Naive thymus-derived CD4-positive, alpha-beta T cell (primary cell): ENCODE measurements at regions of chr18 and their contacts with region 1.

Region 1: DNA sequence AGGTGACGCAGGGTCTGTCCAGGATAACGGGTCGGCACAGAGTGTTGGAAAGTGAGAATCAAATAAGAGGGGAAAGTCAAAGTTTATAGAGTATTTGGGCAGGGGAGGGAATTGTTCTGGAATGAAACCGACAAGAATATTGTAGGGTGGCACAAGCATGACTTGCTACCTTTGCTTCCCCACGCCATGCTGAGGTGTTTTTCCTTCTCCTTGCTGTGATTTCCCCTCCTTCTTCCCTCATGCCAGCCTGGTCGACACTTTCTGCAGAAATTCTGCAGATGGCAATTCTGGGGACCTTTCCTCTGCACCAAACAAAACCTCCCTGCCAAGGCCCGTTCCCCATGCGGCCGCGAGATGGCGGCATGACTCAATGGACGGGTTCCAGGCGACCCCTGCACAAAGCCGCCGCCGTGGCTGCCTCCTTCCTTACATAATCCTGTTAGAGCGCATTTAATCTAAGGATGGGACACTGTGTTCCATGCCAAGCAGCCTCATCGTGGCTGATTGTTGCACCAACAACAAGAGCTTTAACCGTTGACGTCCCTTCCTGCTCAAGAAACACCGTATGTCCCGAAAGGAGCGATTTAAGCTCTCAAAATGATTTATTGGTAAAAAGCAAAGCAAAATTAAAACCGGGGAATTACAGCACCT is at the start of gene MRO:
- DNase-seq: peak; percentile 63 to 82 (median 76)
- ATAC-seq: peak; percentile 98
- H3K4me3 ChIP-seq: peak within 1 kb of the TSS; percentile 49
- H3K4me3 Mint-ChIP-seq: no peak within 1 kb of the TSS
- H3K27ac ChIP-seq: no peak within 1 kb of the TSS
- H3K27ac Mint-ChIP-seq: peak within 1 kb of the TSS in 1 of 9 donors; percentile 12
- H3K4me1 ChIP-seq: peaks cover 0 to 5% of the 10 kb centered on the region in 2 donors
- H3K4me1 Mint-ChIP-seq: peaks cover 0 to 3% (median 0%) of the 10 kb centered on the region in 7 donors
- H3K27me3 ChIP-seq: no peaks in the 10 kb centered on the region
- H3K27me3 Mint-ChIP-seq: peaks cover 7 to 21% (median 14%) of the 10 kb centered on the region in 5 donors
- total RNA-seq, gene MRO: not detected

Region 2: GRCh38 chr18:50866765-50867164 is 46.9 kb after region 1 on chr18:
- CTCF ChIA-PET with region 1: no interaction called
- POLR2A ChIA-PET with region 1: no interaction called
- intact Hi-C with region 1: loop called in 1 of 2 experiments (anchors 2 kb)
- DNase-seq: no peak
- ATAC-seq: peak; percentile 37
- H3K4me3 ChIP-seq: no peak overlapping the region
- H3K4me3 Mint-ChIP-seq: no peak overlapping the region
- H3K27ac ChIP-seq: no peak overlapping the region
- H3K27ac Mint-ChIP-seq: no peak overlapping the region
- H3K4me1 ChIP-seq: no peaks in the 10 kb centered on the region
- H3K4me1 Mint-ChIP-seq: no peaks in the 10 kb centered on the region
- H3K27me3 ChIP-seq: no peaks in the 10 kb centered on the region
- H3K27me3 Mint-ChIP-seq: peaks cover 0 to 15% (median 0%) of the 10 kb centered on the region in 5 donors

Region 3: DNA sequence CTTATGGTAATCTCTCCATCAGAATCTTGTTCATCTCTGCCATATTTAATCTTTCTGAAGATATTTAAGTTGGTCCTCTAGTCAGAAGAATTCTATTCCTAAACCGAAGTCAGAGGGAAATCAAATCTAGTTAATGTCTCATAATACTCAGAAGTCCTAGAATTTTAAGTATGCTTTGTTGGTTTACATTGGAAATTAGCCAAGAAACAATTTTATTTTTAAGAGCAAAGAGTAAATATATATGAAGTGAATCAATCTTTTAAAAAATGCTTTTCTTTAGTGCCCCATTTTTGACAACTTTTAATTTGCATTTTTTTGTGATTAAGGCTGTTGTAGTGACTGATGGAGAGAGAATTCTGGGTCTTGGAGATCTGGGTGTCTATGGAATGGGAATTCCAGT is 97.2 kb after region 1 on chr18:
- CTCF ChIA-PET with region 1: no interaction called
- POLR2A ChIA-PET with region 1: no interaction called
- intact Hi-C with region 1: loop called in 1 of 2 experiments (anchors 5 kb)
- DNase-seq: no peak
- ATAC-seq: no peak
- H3K4me3 ChIP-seq: no peak overlapping the region
- H3K4me3 Mint-ChIP-seq: no peak overlapping the region
- H3K27ac ChIP-seq: no peak overlapping the region
- H3K27ac Mint-ChIP-seq: peak overlapping the region in 1 of 9 donors; percentile 18
- H3K4me1 ChIP-seq: no peaks in the 10 kb centered on the region
- H3K4me1 Mint-ChIP-seq: peaks cover 1 to 11% (median 5%) of the 10 kb centered on the region in 7 donors
- H3K27me3 ChIP-seq: no peaks in the 10 kb centered on the region
- H3K27me3 Mint-ChIP-seq: no peaks in the 10 kb centered on the region

Region 4: DNA sequence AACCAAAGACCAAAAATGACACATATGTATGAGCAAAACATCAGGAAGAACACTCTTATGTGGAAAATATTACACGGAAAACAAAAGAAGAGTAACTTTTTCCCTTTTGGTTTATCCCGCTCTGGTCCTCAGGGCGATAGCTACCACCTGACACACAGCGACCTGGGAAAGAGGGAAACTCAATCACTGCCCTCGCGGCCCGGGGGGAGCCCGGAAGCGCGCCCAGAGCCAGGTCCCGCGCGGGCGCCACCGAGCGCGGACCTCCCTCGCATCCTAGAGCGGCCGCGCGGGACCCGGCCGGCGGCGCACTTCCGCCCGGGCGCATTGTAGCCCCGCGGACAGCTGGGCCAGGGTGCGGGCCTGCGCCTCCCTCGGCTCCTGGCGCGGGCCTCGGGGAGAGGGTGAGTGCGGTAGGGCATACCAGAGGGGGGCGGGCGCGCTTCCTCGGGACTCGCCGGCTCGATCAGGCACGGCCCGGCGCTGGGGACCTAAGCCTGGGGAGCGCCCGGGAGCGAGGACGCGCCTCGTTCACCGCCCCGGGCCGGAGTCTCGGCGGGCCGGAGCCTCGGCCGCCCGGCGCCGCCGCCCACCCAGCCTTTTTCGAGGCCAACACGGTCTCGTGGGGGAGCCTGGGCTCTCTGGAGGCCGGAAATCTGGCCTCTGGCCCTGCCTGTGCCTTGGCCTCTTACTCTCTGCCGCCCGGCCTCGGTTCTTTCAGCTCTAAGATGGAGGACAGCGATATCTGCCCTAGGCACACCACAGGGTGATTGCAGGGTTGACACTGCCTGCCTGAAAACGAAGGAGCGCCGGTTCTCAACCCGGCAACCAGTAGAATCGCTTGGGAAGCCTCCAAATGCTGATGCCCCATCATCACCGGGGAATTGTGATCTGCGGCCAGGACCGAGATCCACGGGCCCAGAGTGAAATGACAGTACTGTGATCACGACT is 148.1 kb after region 1 on chr18 and contains the start of gene ELAC1:
- CTCF ChIA-PET with region 1: interaction called, 3 read pairs
- POLR2A ChIA-PET with region 1: no interaction called
- intact Hi-C with region 1: loop called (anchors 1 to 2 kb)
- DNase-seq: peak; percentile 48 to 75 (median 65)
- ATAC-seq: peak; percentile 93
- H3K4me3 ChIP-seq: peak within 1 kb of the TSS; percentile 80
- H3K4me3 Mint-ChIP-seq: peak within 1 kb of the TSS; percentile 86 to 98 (median 94)
- H3K27ac ChIP-seq: peak within 1 kb of the TSS; percentile 90
- H3K27ac Mint-ChIP-seq: peak within 1 kb of the TSS; percentile 77 to 95 (median 92)
- H3K4me1 ChIP-seq: peaks cover 8 to 13% of the 10 kb centered on the region in 2 donors
- H3K4me1 Mint-ChIP-seq: peaks cover 15 to 35% (median 29%) of the 10 kb centered on the region in 7 donors
- H3K27me3 ChIP-seq: no peaks in the 10 kb centered on the region
- H3K27me3 Mint-ChIP-seq: no peaks in the 10 kb centered on the region
- total RNA-seq, gene ELAC1: 4.3 to 11.2 (median 6.3) TPM

Region 5: DNA sequence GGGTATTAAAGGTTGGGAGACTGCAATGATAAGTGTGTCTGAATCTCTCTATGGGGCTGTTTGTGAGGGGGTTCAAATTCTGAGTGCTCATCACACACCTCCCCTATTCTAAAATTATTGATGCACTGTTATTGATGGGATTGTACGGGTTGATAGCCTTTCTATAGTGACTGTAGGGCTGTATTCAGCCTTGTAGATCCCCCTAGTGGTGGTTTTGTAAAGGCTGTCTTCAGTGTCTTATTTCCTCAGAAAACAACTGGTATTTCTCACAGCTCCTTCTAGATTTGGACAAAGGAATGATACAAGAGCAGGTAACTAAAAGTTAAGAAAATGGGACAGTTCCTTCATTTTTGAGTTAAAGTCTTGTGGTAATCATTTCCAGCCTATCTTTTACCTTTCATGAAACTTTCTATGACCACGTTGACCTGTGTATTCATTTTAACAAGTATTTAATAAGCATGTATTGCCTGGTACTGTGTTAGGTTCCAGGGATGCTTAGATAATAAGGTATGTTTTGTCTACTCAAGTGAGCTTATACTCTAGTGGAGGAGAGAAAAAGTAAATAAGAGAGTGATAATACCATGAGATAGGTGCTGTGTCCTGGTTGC is 231.4 kb after region 1 on chr18:
- CTCF ChIA-PET with region 1: interaction called, 17 read pairs
- POLR2A ChIA-PET with region 1: no interaction called
- intact Hi-C with region 1: loop called (anchors 1 kb)
- DNase-seq: peak in 7 of 9 donors; percentile 47 to 71 (median 62)
- ATAC-seq: peak; percentile 95
- H3K4me3 ChIP-seq: no peak overlapping the region
- H3K4me3 Mint-ChIP-seq: no peak overlapping the region
- H3K27ac ChIP-seq: no peak overlapping the region
- H3K27ac Mint-ChIP-seq: peak overlapping the region in 8 of 9 donors; percentile 3 to 80 (median 36)
- H3K4me1 ChIP-seq: peaks cover 8% of the 10 kb centered on the region in 2 donors
- H3K4me1 Mint-ChIP-seq: peaks cover 17 to 55% (median 42%) of the 10 kb centered on the region in 7 donors
- H3K27me3 ChIP-seq: no peaks in the 10 kb centered on the region
- H3K27me3 Mint-ChIP-seq: no peaks in the 10 kb centered on the region

Region 6: DNA sequence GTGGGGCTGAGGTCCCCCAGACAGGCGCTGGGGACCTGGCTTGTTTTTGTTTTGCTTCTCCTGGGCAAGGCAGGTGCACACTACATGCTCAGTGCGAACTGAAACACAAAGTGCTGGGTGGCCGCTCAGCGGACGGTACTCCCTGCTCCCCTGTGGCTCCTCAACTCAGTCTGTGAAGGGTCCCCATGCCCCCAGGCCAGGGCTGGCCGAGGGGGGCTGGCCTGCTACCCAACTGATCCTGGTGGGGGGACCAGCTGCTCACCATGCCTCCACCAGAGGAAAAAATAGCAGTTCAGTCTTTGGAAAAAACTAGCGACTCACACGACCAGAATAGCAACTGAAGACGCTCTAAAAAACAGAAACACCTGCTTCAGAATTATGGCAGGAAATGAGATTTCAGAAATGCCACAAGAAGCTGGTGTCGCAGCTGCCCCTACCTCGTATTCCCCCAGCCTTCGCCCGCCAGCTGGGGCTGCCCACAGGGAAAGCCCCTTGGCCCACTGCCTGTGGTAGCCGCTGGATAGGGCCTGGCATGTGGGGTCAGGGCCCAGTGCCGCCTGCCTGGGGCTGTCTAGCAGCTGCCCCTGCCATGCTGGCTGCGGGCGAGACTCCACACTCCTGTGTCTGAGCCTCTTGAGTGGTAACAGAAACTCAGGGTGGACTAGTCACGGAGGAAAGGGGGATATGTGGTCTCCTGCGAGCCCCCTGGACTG is 334.0 kb after region 1 on chr18:
- CTCF ChIA-PET with region 1: interaction called, 5 read pairs
- POLR2A ChIA-PET with region 1: no interaction called
- intact Hi-C with region 1: loop called in 1 of 2 experiments (anchors 1 kb)
- DNase-seq: peak; percentile 35 to 65 (median 55)
- ATAC-seq: peak; percentile 76
- H3K4me3 ChIP-seq: peak overlapping the region; percentile 52
- H3K4me3 Mint-ChIP-seq: peak overlapping the region; percentile 80 to 96 (median 87)
- H3K27ac ChIP-seq: peak overlapping the region; percentile 61
- H3K27ac Mint-ChIP-seq: peak overlapping the region; percentile 91 to 98 (median 94)
- H3K4me1 ChIP-seq: peaks cover 22 to 23% of the 10 kb centered on the region in 2 donors
- H3K4me1 Mint-ChIP-seq: peaks cover 19 to 44% (median 37%) of the 10 kb centered on the region in 7 donors
- H3K27me3 ChIP-seq: no peaks in the 10 kb centered on the region
- H3K27me3 Mint-ChIP-seq: no peaks in the 10 kb centered on the region